Mammary epithelial cell (primary cell): ENCODE measurements at regions of chr1 and their contacts with region 1.

Region 1: GRCh38 chr1:117534995-117535467 is 70.8 kb upstream of the TENT5C start:
- DNase-seq: peak; percentile 51
- H3K4me3 ChIP-seq: no peak overlapping the region
- H3K27ac ChIP-seq: no peak overlapping the region
- H3K4me1 ChIP-seq: no peaks in the 10 kb centered on the region
- H3K27me3 ChIP-seq: no peaks in the 10 kb centered on the region
- CTCF ChIP-seq: peak; percentile 50 to 68

Region 2: DNA sequence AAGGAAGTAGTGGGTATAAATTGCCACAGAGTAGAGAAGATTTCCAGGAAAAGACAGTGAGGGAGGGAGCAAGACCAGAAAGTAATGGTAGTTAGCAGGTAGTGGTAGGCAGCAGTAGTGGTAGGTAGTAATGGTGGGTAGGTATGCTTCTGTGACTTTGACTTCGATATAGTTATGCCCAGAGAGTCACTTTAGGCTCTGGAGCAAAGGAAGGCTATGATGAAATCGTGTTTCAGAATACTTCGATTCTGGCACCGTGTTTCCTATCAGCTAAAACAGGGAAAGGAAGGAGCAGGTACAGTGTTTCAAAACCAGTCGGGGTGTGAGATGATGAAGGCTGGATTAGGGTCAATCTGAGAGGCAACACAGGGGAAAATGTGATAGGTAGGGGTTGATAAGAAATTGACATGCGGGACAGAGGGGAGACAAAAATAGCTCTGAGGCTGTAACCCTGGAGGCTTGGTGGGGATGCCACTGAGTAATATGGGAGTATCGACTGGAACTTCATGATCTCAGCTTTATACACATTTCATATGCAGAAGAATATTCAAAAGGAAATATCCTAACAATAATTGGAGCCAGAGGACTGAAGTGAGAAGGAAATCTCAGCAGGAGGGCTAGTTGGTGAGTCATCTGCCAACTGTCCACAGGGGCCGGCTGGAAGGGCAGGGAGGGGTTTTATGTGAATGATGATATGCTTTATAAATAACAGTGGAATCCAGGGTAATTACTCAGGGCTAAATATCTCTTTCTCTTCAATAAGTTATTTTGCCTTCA is 388.3 kb before region 1 on chr1:
- CTCF ChIA-PET with region 1: no interaction called
- dilution Hi-C with region 1: no loop called
- in situ Hi-C with region 1: no loop called
- intact Hi-C with region 1: loop called (anchors 5 kb)
- DNase-seq: peak; percentile 73
- H3K4me3 ChIP-seq: no peak overlapping the region
- H3K27ac ChIP-seq: no peak overlapping the region
- H3K4me1 ChIP-seq: peaks cover 13% of the 10 kb centered on the region
- H3K27me3 ChIP-seq: no peaks in the 10 kb centered on the region
- CTCF ChIP-seq: no peak

Region 3: GRCh38 chr1:117591291-117591690 is 56.3 kb after region 1 on chr1:
- CTCF ChIA-PET with region 1: interaction called, 10 read pairs
- dilution Hi-C with region 1: no loop called
- in situ Hi-C with region 1: no loop called
- intact Hi-C with region 1: no loop called
- DNase-seq: no peak
- H3K4me3 ChIP-seq: no peak overlapping the region
- H3K27ac ChIP-seq: no peak overlapping the region
- H3K4me1 ChIP-seq: no peaks in the 10 kb centered on the region
- H3K27me3 ChIP-seq: no peaks in the 10 kb centered on the region
- CTCF ChIP-seq: no peak